CD4-positive, alpha-beta memory T cell (primary cell): ENCODE measurements at regions of chr12 and their contacts with region 1.

Region 1: DNA sequence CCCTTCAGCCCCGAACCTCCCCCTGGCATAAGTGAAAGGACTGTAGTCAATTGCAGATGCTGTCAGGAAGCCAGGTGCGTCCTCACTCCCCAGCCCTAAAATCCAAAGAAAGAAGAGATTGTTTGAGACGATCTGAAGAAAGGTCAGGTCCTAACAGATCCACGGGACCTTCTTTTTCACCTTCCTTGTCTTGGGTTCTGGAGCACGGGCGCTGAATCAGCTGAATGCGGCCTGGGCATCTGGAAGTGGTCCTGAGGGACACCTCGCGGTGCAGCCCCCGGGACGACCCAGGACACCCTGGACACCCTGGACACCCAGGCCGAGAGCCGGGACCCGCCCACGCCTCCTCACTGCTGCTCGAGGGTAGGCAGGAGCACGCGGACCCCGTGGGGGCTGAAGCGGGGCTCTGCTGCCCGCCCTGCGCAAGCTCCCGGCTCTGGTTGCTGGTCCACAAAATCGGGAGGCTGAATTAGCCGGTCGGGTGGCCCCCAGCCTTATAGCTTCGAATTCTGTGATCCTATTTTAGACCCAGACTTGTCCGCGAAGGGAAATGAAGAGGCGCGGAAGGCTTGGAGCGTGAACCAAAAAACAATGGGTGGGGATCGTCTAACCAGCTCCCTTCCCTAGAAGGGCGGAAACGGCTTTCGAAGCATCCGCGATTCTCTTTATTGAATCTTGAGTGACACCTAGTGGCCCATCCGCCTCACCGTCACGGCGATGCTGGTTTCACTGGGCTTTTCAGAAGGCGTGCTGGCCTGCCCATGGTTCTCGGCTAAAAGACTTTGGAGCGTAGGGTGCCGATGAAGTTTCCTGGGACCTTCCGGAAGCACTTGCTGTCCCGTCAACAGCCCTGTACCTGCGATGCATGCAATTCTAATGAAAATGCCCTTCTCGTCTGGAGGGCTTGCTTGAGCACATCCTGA is 46.4 kb upstream of the PLXNC1 start:
- DNase-seq: peak; percentile 82 to 86 (median 83)
- H3K4me3 ChIP-seq: peak overlapping the region; percentile 54 to 82
- H3K4me3 Mint-ChIP-seq: peak overlapping the region; percentile 85 to 91 (median 88)
- H3K27ac ChIP-seq: peak overlapping the region; percentile 20
- H3K27ac Mint-ChIP-seq: peak overlapping the region; percentile 65 to 91 (median 72)
- H3K4me1 ChIP-seq: peaks cover 10% of the 10 kb centered on the region
- H3K4me1 Mint-ChIP-seq: peaks cover 5 to 21% (median 7%) of the 10 kb centered on the region in 4 donors
- H3K27me3 ChIP-seq: peaks cover 2% of the 10 kb centered on the region
- H3K27me3 Mint-ChIP-seq: peaks cover 10 to 11% of the 10 kb centered on the region in 2 donors

Region 2: DNA sequence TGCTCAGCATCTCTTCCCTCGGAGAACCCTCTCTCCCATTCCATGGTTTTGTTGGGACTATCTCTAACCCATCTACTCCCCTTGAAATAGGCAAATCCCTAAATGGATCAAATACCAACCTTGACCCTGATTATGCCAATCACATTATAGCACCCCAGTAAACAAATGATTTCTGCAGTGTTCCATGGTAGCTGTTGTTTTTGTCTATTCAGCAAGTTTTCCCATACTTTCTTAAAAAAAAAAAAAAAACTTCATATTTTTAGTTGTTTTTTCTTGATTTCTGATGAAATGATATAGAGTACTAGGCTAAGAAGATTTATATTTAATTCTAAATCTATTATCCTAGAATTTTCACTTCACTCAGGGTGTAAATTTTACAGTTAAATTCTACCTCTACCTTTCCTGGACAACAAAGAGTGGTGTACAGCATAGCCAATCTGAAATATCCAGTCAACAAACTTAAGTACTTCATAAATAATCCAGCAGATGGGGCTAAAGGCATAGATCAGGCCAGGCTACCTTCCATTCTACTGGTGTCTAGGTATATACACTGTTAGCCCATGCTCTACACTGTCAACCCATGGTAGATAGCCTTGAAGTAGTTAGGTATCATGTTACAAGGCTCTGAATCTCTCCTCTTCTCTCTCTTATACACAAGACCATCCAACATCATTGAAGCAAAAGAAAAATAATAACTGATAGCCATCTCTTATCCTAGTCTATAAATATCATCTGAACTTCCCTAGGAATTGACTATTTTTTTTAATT is 1317.0 kb before region 1 on chr12:
- CTCF ChIA-PET with region 1: interaction called, 35 read pairs
- POLR2A ChIA-PET with region 1: no interaction called
- intact Hi-C with region 1: loop called (anchors 1 kb)
- DNase-seq: peak; percentile 54 to 73 (median 67)
- H3K4me3 ChIP-seq: no peak overlapping the region
- H3K4me3 Mint-ChIP-seq: no peak overlapping the region
- H3K27ac ChIP-seq: no peak overlapping the region
- H3K27ac Mint-ChIP-seq: peak overlapping the region in 1 of 7 donors; percentile 4
- H3K4me1 ChIP-seq: no peaks in the 10 kb centered on the region
- H3K4me1 Mint-ChIP-seq: peaks cover 0 to 4% (median 2%) of the 10 kb centered on the region in 4 donors
- H3K27me3 ChIP-seq: no peaks in the 10 kb centered on the region
- H3K27me3 Mint-ChIP-seq: no peaks in the 10 kb centered on the region

Region 3: GRCh38 chr12:93441617-93442410 is 660.2 kb before region 1 on chr12 and contains the start of gene UBE2N:
- CTCF ChIA-PET with region 1: interaction called, 3 read pairs
- POLR2A ChIA-PET with region 1: no interaction called
- intact Hi-C with region 1: loop called (anchors 5 kb)
- DNase-seq: peak; percentile 95 to 97 (median 97)
- H3K4me3 ChIP-seq: peak within 1 kb of the TSS; percentile 90 to 98
- H3K4me3 Mint-ChIP-seq: peak within 1 kb of the TSS; percentile 94 to 98 (median 97)
- H3K27ac ChIP-seq: peak within 1 kb of the TSS; percentile 95
- H3K27ac Mint-ChIP-seq: peak within 1 kb of the TSS; percentile 94 to 100 (median 99)
- H3K4me1 ChIP-seq: peaks cover 48% of the 10 kb centered on the region
- H3K4me1 Mint-ChIP-seq: peaks cover 36 to 51% (median 45%) of the 10 kb centered on the region in 4 donors
- H3K27me3 ChIP-seq: no peaks in the 10 kb centered on the region
- H3K27me3 Mint-ChIP-seq: no peaks in the 10 kb centered on the region
- total RNA-seq, gene UBE2N: 71.2 to 72.8 TPM

Region 4: GRCh38 chr12:93521225-93522080 is 580.5 kb before region 1 on chr12:
- CTCF ChIA-PET with region 1: interaction called, 25 read pairs
- POLR2A ChIA-PET with region 1: no interaction called
- intact Hi-C with region 1: no loop called
- DNase-seq: no peak
- H3K4me3 ChIP-seq: no peak overlapping the region
- H3K4me3 Mint-ChIP-seq: no peak overlapping the region
- H3K27ac ChIP-seq: no peak overlapping the region
- H3K27ac Mint-ChIP-seq: no peak overlapping the region
- H3K4me1 ChIP-seq: no peaks in the 10 kb centered on the region
- H3K4me1 Mint-ChIP-seq: peaks cover 0 to 4% (median 0%) of the 10 kb centered on the region in 4 donors
- H3K27me3 ChIP-seq: no peaks in the 10 kb centered on the region
- H3K27me3 Mint-ChIP-seq: peaks cover 1 to 2% of the 10 kb centered on the region in 2 donors

Region 5: DNA sequence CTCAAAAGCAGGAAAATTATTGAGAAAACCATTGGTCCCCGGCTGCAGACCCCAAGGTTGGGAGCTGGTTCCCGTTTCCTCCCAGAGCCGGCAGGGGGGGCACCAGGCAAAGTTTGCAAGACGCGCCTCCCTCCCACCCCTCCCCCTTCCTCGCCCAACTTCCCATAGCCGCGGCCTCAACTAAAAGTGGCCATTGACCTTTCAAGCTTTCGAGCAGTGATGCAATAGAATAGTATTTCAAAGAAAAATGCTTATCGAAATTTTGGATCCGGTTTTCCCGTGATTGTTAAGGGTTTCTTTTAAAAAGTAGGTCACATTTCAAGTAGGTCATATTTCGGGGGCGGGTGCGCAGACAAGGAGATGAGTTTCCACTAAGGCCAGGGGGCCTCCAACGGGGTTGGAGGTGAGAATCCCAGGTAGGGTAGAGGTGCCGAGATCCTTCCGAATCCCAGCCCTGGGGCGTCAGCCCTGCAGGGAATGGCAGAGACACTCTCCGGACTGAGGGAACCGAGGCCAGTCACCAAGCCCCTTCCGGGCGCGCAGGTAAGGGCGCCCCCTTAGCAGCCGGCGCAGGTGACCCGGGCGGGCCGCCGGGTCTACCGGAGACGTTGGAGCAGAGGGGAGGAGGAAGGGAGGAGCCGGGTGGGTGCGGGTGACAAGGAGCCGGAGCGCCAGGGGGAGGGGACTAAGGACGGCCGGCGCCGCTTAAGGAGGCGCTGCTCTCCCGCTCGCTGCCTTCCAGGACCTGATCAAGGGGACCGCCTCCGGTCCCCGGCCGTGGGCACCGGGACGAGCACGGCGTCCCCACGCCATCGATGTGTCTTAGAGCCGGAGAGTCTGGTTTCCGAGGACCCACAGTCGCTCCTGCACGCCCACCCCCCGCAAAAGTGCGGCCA is 532.1 kb before region 1 on chr12:
- CTCF ChIA-PET with region 1: interaction called, 217 read pairs
- POLR2A ChIA-PET with region 1: interaction called, 37 read pairs
- intact Hi-C with region 1: loop called (anchors 1 kb)
- DNase-seq: peak; percentile 73 to 80 (median 74)
- H3K4me3 ChIP-seq: peak overlapping the region; percentile 71 to 78
- H3K4me3 Mint-ChIP-seq: peak overlapping the region; percentile 90 to 98 (median 92)
- H3K27ac ChIP-seq: peak overlapping the region; percentile 73
- H3K27ac Mint-ChIP-seq: peak overlapping the region; percentile 87 to 96 (median 92)
- H3K4me1 ChIP-seq: peaks cover 28% of the 10 kb centered on the region
- H3K4me1 Mint-ChIP-seq: peaks cover 16 to 41% (median 28%) of the 10 kb centered on the region in 4 donors
- H3K27me3 ChIP-seq: peaks cover 3% of the 10 kb centered on the region
- H3K27me3 Mint-ChIP-seq: peaks cover 1 to 2% of the 10 kb centered on the region in 2 donors

Region 6: GRCh38 chr12:93785262-93786010 is 316.6 kb before region 1 on chr12:
- CTCF ChIA-PET with region 1: interaction called, 22 read pairs
- POLR2A ChIA-PET with region 1: interaction called, 6 read pairs
- intact Hi-C with region 1: no loop called
- DNase-seq: peak; percentile 11 to 73 (median 31)
- H3K4me3 ChIP-seq: no peak overlapping the region
- H3K4me3 Mint-ChIP-seq: peak overlapping the region in 4 of 8 donors; percentile 5 to 62 (median 48)
- H3K27ac ChIP-seq: no peak overlapping the region
- H3K27ac Mint-ChIP-seq: peak overlapping the region in 6 of 7 donors; percentile 64 to 92 (median 84)
- H3K4me1 ChIP-seq: peaks cover 33% of the 10 kb centered on the region
- H3K4me1 Mint-ChIP-seq: peaks cover 22 to 61% (median 40%) of the 10 kb centered on the region in 4 donors
- H3K27me3 ChIP-seq: no peaks in the 10 kb centered on the region
- H3K27me3 Mint-ChIP-seq: no peaks in the 10 kb centered on the region

Region 7: DNA sequence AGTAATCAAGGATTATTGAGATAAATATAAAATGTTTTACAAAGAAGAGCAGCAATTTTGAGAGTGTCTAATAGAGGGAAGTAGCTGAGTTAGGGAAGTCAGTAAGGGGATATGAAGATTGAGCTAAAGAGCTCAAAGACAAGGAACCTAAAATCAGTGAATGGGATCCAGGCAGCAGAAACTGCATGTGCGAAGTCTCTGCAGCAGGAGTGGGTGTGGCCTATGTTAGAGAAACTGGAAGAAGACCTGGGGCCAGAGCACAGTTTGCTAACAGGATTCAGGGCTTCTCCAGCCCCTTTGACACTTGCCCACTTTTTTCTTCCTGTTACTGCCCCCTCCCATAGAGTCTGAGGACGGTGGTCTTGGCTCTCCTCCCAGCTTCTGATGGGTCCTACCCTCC is 10.1 kb after region 1 on chr12:
- CTCF ChIA-PET with region 1: interaction called, 27 read pairs
- POLR2A ChIA-PET with region 1: no interaction called
- intact Hi-C with region 1: no loop called
- DNase-seq: no peak
- H3K4me3 ChIP-seq: no peak overlapping the region
- H3K4me3 Mint-ChIP-seq: no peak overlapping the region
- H3K27ac ChIP-seq: no peak overlapping the region
- H3K27ac Mint-ChIP-seq: peak overlapping the region in 1 of 7 donors; percentile 71
- H3K4me1 ChIP-seq: no peaks in the 10 kb centered on the region
- H3K4me1 Mint-ChIP-seq: no peaks in the 10 kb centered on the region
- H3K27me3 ChIP-seq: peaks cover 1% of the 10 kb centered on the region
- H3K27me3 Mint-ChIP-seq: no peaks in the 10 kb centered on the region

Region 8: GRCh38 chr12:95608252-95609033 is 1506.4 kb after region 1 on chr12:
- CTCF ChIA-PET with region 1: no interaction called
- POLR2A ChIA-PET with region 1: no interaction called
- intact Hi-C with region 1: no loop called
- DNase-seq: no peak
- H3K4me3 ChIP-seq: no peak overlapping the region
- H3K4me3 Mint-ChIP-seq: no peak overlapping the region
- H3K27ac ChIP-seq: no peak overlapping the region
- H3K27ac Mint-ChIP-seq: no peak overlapping the region
- H3K4me1 ChIP-seq: no peaks in the 10 kb centered on the region
- H3K4me1 Mint-ChIP-seq: no peaks in the 10 kb centered on the region
- H3K27me3 ChIP-seq: peaks cover 4% of the 10 kb centered on the region
- H3K27me3 Mint-ChIP-seq: peaks cover 6 to 7% of the 10 kb centered on the region in 2 donors